CD4-positive, alpha-beta T cell (primary cell): ENCODE measurements at regions of chr2 and their contacts with region 1.

Region 1: GRCh38 chr2:30165050-30165520 is 18.3 kb downstream of the YPEL5 start:
- DNase-seq: peak in 13 of 14 experiments; percentile 23 to 90 (median 50)
- ATAC-seq: peak; percentile 76
- H3K4me3 ChIP-seq: no peak overlapping the region
- H3K4me3 Mint-ChIP-seq: no peak overlapping the region
- H3K27ac ChIP-seq: no peak overlapping the region
- H3K27ac Mint-ChIP-seq: peak overlapping the region; percentile 74
- H3K4me1 ChIP-seq: no peaks in the 10 kb centered on the region
- H3K4me1 Mint-ChIP-seq: peaks cover 18% of the 10 kb centered on the region
- H3K27me3 ChIP-seq: no peaks in the 10 kb centered on the region
- H3K27me3 Mint-ChIP-seq: no peaks in the 10 kb centered on the region
- CTCF ChIP-seq: peak; percentile 97

Region 2: GRCh38 chr2:29196792-29197788 is 968.0 kb before region 1 on chr2:
- CTCF ChIA-PET with region 1: no interaction called
- POLR2A ChIA-PET with region 1: no interaction called
- intact Hi-C with region 1: no loop called
- DNase-seq: peak; percentile 64 to 85 (median 73)
- ATAC-seq: peak; percentile 97
- H3K4me3 ChIP-seq: no peak overlapping the region
- H3K4me3 Mint-ChIP-seq: no peak overlapping the region
- H3K27ac ChIP-seq: no peak overlapping the region
- H3K27ac Mint-ChIP-seq: no peak overlapping the region
- H3K4me1 ChIP-seq: peaks cover 3% of the 10 kb centered on the region
- H3K4me1 Mint-ChIP-seq: peaks cover 5% of the 10 kb centered on the region
- H3K27me3 ChIP-seq: no peaks in the 10 kb centered on the region
- H3K27me3 Mint-ChIP-seq: no peaks in the 10 kb centered on the region
- CTCF ChIP-seq: peak; percentile 95

Region 3: DNA sequence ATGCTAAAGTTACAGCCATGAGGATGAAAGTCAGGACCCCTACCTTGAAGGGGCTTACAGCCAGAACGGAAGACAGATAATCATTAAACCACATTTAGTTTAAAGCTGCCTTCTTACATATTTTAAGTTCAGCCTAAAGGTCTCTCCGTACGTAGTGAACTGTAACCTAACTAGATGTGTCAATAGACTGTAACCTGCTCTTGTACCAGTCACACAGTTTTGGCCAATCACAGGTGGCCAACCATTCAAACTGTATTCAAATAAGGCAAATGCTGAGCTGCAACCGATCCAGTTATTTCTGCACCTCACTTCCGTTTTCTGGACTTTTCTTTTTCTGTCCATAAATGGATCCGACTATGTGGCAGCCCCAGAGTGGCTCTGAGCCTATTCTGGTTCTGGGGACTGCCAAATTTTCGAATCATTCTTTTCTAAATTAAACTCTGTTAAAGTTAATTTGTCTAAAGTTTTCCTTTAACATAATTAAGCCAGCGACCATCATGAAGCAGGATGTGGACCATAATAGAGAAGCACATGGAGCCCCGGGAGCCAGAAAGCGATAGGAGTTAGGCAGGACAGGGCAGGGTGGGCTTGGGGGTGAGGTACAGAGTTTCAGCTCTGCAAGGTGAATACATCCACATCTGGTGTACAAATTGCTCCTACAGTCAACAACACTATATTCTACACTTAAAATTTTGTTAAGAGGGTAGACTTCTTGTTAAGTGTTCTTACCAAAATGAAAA is 66.6 kb before region 1 on chr2:
- CTCF ChIA-PET with region 1: interaction called, 7 read pairs
- POLR2A ChIA-PET with region 1: no interaction called
- intact Hi-C with region 1: loop called in 1 of 2 experiments (anchors 5 kb)
- DNase-seq: no peak
- ATAC-seq: no peak
- H3K4me3 ChIP-seq: no peak overlapping the region
- H3K4me3 Mint-ChIP-seq: no peak overlapping the region
- H3K27ac ChIP-seq: no peak overlapping the region
- H3K27ac Mint-ChIP-seq: no peak overlapping the region
- H3K4me1 ChIP-seq: no peaks in the 10 kb centered on the region
- H3K4me1 Mint-ChIP-seq: no peaks in the 10 kb centered on the region
- H3K27me3 ChIP-seq: peaks cover 4 to 9% of the 10 kb centered on the region in 2 experiments
- H3K27me3 Mint-ChIP-seq: peaks cover 46% of the 10 kb centered on the region
- CTCF ChIP-seq: no peak

Region 4: DNA sequence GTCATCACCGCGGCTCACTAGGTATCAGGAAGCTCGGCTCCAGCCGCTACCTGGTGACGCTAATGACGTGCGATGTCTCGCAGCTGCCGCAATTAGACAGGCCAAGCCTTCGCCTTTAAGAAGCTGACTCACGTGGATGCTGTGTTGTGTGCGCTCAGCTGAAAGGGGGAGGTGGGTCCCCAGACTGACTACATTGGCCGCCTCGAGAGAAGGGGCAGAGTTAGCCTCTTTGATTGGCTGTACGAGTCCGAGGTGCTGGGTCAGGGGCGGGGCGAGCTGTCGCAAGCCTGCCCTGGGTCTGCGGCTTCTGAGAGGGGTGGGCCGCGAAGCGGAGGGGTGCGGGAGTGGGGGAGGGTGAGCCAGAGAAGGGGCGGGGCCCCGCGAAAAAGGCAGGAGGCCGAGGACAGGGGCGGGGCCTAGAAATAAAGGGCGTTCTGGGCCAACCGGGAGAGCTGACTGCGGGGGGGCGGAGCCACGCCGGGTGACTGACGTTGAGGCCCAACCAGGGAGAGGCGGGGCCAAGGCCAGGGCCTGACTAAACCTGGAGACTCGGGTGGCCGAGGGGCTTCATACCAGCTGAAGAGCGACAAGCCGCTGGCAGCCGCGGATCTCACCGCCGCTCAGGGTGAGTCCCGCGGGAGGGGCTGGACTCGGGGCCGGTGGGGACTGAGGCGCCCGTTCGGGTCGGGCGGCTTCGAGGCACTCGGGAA is 18.5 kb before region 1 on chr2 and contains the start of gene YPEL5:
- CTCF ChIA-PET with region 1: interaction called, 78 read pairs
- POLR2A ChIA-PET with region 1: interaction called, 68 read pairs
- intact Hi-C with region 1: loop called in 1 of 2 experiments (anchors 2 kb)
- DNase-seq: peak; percentile 99 to 100 (median 99)
- ATAC-seq: peak; percentile 82
- H3K4me3 ChIP-seq: peak within 1 kb of the TSS; percentile 71
- H3K4me3 Mint-ChIP-seq: peak within 1 kb of the TSS; percentile 94
- H3K27ac ChIP-seq: peak within 1 kb of the TSS; percentile 97 to 100
- H3K27ac Mint-ChIP-seq: peak within 1 kb of the TSS; percentile 99
- H3K4me1 ChIP-seq: peaks cover 38% of the 10 kb centered on the region
- H3K4me1 Mint-ChIP-seq: peaks cover 68% of the 10 kb centered on the region
- H3K27me3 ChIP-seq: no peaks in the 10 kb centered on the region
- H3K27me3 Mint-ChIP-seq: no peaks in the 10 kb centered on the region
- CTCF ChIP-seq: no peak
- total RNA-seq, gene YPEL5: 932 to 972 TPM

Region 5: GRCh38 chr2:30231212-30231995 is 66.3 kb after region 1 on chr2 and contains the start of gene LBH:
- CTCF ChIA-PET with region 1: interaction called, 24 read pairs
- POLR2A ChIA-PET with region 1: interaction called, 34 read pairs
- intact Hi-C with region 1: loop called in 1 of 2 experiments (anchors 5 kb)
- DNase-seq: peak; percentile 86 to 96 (median 90)
- ATAC-seq: peak; percentile 57
- H3K4me3 ChIP-seq: peak within 1 kb of the TSS; percentile 87
- H3K4me3 Mint-ChIP-seq: peak within 1 kb of the TSS; percentile 93
- H3K27ac ChIP-seq: peak within 1 kb of the TSS; percentile 90 to 96
- H3K27ac Mint-ChIP-seq: peak within 1 kb of the TSS; percentile 99
- H3K4me1 ChIP-seq: peaks cover 58% of the 10 kb centered on the region
- H3K4me1 Mint-ChIP-seq: peaks cover 72% of the 10 kb centered on the region
- H3K27me3 ChIP-seq: no peaks in the 10 kb centered on the region
- H3K27me3 Mint-ChIP-seq: no peaks in the 10 kb centered on the region
- CTCF ChIP-seq: no peak
- total RNA-seq, gene LBH: 131 to 135 TPM

Region 6: DNA sequence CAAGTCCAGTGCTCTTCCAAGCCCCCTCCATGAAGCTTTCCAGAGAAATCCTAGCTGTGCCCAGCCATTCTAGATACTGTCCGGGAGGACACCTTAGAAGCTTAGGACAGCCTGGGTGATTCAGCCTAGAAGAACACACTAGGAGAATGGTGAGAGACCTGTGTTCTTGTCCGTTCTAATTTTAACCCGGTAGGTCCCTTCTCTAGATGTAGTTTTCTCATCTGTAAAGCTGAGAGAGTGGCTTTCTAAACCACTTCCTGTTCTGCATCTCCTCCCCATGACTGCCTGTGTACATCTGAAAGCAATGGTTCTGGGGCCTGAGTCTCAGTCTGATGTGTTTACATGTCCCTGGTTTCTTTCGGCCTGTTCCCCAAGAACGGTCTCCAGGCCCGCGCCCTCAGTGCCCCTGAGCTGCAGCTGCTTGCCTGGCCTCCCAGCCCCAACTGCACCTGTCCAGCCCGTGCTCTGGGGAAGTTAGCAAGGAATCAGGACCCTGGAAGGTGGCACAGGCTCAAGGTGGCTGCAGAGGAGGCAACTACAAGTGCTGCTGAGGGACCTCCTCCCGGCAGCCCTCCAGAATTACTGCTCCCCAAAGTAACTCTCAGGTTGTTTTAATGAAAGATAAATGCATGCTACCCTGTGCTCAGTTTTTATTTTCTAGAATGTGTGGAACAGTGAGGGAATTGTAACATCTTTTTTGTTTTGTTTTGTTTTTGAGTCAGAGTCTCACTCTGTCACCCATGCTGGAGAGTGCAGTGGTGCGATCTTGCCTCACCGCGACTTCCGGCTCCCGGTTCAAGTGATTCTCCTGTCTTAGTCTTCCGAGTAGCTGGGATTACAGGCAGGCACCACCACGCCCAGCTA is 172.1 kb after region 1 on chr2:
- CTCF ChIA-PET with region 1: interaction called, 6 read pairs
- POLR2A ChIA-PET with region 1: interaction called, 3 read pairs
- intact Hi-C with region 1: loop called in 1 of 2 experiments (anchors 2 kb)
- DNase-seq: peak in 13 of 14 experiments; percentile 21 to 84 (median 52)
- ATAC-seq: peak; percentile 77
- H3K4me3 ChIP-seq: peak overlapping the region; percentile 20
- H3K4me3 Mint-ChIP-seq: peak overlapping the region; percentile 80
- H3K27ac ChIP-seq: peak overlapping the region; percentile 54 to 68
- H3K27ac Mint-ChIP-seq: peak overlapping the region; percentile 98
- H3K4me1 ChIP-seq: peaks cover 76% of the 10 kb centered on the region
- H3K4me1 Mint-ChIP-seq: peaks cover 87% of the 10 kb centered on the region
- H3K27me3 ChIP-seq: no peaks in the 10 kb centered on the region
- H3K27me3 Mint-ChIP-seq: no peaks in the 10 kb centered on the region
- CTCF ChIP-seq: no peak

Region 7: GRCh38 chr2:30711646-30712085 is 546.6 kb after region 1 on chr2:
- CTCF ChIA-PET with region 1: interaction called, 47 read pairs
- POLR2A ChIA-PET with region 1: interaction called, 53 read pairs
- intact Hi-C with region 1: loop called (anchors 1 kb)
- DNase-seq: peak; percentile 72 to 93 (median 81)
- ATAC-seq: peak; percentile 93
- H3K4me3 ChIP-seq: no peak overlapping the region
- H3K4me3 Mint-ChIP-seq: no peak overlapping the region
- H3K27ac ChIP-seq: no peak overlapping the region
- H3K27ac Mint-ChIP-seq: no peak overlapping the region
- H3K4me1 ChIP-seq: peaks cover 11% of the 10 kb centered on the region
- H3K4me1 Mint-ChIP-seq: peaks cover 6% of the 10 kb centered on the region
- H3K27me3 ChIP-seq: no peaks in the 10 kb centered on the region
- H3K27me3 Mint-ChIP-seq: peaks cover 5% of the 10 kb centered on the region
- CTCF ChIP-seq: peak; percentile 100

Region 8: GRCh38 chr2:31333527-31334183 is 1168.6 kb after region 1 on chr2:
- CTCF ChIA-PET with region 1: no interaction called
- POLR2A ChIA-PET with region 1: no interaction called
- intact Hi-C with region 1: loop called (anchors 5 to 10 kb)
- DNase-seq: peak; percentile 60 to 81 (median 68)
- ATAC-seq: peak; percentile 80
- H3K4me3 ChIP-seq: no peak overlapping the region
- H3K4me3 Mint-ChIP-seq: no peak overlapping the region
- H3K27ac ChIP-seq: no peak overlapping the region
- H3K27ac Mint-ChIP-seq: no peak overlapping the region
- H3K4me1 ChIP-seq: no peaks in the 10 kb centered on the region
- H3K4me1 Mint-ChIP-seq: peaks cover 4% of the 10 kb centered on the region
- H3K27me3 ChIP-seq: peaks cover 0 to 2% of the 10 kb centered on the region in 2 experiments
- H3K27me3 Mint-ChIP-seq: peaks cover 5% of the 10 kb centered on the region
- CTCF ChIP-seq: peak; percentile 94